Right cardiac atrium (tissue), 5 donors: ENCODE measurements at regions of chr18 and their contacts with region 1.

Region 1: DNA sequence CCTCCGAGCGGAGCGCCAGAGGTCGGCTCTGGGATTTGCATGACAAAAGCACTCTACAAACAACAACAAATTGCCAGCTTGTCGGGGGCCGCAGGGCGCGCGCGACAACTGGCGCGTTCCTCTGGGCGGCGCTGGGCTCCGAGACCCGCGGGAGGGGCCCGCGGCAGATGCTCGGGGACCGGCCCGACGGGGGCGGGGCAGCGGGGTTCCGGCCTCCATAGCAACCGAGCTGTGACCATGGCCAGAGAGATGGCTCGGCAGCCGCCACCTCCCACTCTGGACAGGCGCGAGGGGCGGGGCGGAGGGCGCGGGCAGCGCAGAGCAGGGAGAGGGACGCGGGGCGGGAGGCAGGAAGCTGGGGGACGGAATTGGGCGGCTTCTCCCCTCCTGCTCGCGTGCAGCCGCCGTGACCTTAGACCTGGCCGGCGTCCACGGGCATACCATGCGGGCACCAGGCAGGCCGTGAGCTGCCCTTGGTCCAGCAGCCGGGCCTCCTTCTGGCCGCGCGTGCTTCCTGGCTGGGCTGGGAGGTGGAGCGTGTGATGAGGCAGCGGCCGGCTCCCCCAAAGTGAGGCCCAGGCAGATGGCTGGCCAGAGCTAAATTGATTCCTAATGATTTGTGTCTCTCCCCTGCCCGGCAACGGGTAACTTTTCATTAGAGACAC is 171.5 kb downstream of the CELF4 start:
- DNase-seq: peak; percentile 85 to 95 (median 94)
- ATAC-seq: peak; percentile 97
- H3K4me3 ChIP-seq: peak overlapping the region; percentile 17
- H3K27ac ChIP-seq: no peak overlapping the region
- H3K4me1 ChIP-seq: no peaks in the 10 kb centered on the region
- H3K27me3 ChIP-seq: no peaks in the 10 kb centered on the region

Region 2: DNA sequence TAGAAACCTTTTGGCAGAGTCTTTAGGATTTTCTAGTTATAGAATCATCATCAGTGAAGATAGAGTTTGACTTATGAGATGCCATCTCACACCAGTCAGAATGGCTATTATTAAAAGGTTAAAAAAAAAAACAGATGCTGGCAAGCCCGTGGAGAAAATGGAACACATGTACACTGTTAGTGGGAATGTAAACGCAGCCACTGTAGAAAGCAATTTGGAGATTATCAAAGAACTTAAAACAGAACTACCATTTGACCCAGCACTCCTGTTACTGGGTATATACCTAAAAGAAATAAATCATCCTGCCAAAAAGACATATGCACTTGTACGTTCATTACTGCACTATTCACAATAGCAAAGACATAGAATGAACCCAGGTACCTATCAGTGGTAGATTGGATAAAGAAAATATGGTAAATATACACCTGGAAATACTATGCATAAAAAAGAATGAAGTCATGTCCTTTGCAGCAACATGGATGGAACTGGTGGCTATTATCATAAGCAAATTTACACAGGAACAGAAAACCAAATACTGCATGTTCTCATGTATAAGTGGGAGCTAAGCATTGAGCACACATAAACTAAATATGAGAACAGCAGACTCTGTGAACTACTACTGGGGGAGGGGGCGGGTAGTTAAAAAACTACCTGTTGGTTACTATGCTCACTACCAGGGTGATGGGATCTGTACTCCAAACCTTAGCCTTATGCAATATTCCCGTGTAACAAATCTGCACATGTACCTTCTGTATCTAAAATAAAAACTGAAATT is 286.1 kb before region 1 on chr18:
- intact Hi-C with region 1: no loop called
- DNase-seq: no peak
- ATAC-seq: no peak
- H3K4me3 ChIP-seq: no peak overlapping the region
- H3K27ac ChIP-seq: no peak overlapping the region
- H3K4me1 ChIP-seq: no peaks in the 10 kb centered on the region
- H3K27me3 ChIP-seq: no peaks in the 10 kb centered on the region

Region 3: DNA sequence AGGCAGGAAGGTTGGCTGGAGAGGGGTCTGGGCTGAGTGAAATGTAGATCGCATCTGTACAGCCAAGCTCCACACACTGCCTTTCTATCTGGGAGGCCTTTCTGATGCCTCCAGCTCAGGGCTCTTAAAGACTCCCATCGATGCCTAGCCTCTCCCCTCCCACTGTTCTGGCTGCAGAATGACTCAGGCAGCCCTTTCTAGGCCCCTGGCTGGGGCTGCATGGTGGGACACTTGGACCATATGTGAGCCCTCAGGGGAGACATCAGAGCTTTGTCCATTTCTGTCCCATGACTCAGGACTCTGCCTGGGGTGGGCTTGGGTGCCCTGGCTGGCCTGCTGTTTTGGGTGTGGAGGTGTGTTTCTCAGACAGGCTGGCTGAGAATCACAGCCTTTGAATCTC is 70.2 kb after region 1 on chr18:
- intact Hi-C with region 1: no loop called
- DNase-seq: no peak
- ATAC-seq: no peak
- H3K4me3 ChIP-seq: no peak overlapping the region
- H3K27ac ChIP-seq: no peak overlapping the region
- H3K4me1 ChIP-seq: no peaks in the 10 kb centered on the region
- H3K27me3 ChIP-seq: no peaks in the 10 kb centered on the region

Region 4: GRCh38 chr18:37476182-37476581 is 82.1 kb after region 1 on chr18:
- intact Hi-C with region 1: loop called in 1 of 4 experiments (anchors 10 kb)
- DNase-seq: no peak
- ATAC-seq: no peak
- H3K4me3 ChIP-seq: no peak overlapping the region
- H3K27ac ChIP-seq: no peak overlapping the region
- H3K4me1 ChIP-seq: no peaks in the 10 kb centered on the region
- H3K27me3 ChIP-seq: no peaks in the 10 kb centered on the region

Region 5: DNA sequence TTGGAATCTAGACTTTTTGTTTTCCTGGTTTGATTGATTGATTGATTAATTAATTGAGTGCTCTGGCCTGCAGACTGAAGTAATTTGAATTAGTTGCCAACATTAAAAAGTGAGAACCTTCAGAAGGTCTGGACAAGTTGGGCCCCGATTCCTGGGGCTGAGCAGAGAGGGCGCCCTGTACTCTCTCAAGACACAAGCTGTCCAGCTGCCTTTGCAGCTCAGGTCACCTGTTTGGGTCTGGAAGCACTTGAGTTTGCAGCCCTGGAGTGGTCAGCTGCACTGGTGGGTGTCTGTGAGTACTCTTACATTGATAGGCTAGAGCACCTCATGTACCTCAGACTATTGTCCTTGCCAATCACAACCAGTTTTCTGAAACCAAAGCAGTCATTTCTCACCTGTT is 194.2 kb after region 1 on chr18:
- intact Hi-C with region 1: no loop called
- DNase-seq: no peak
- ATAC-seq: no peak
- H3K4me3 ChIP-seq: no peak overlapping the region
- H3K27ac ChIP-seq: no peak overlapping the region
- H3K4me1 ChIP-seq: no peaks in the 10 kb centered on the region
- H3K27me3 ChIP-seq: no peaks in the 10 kb centered on the region

Region 6: DNA sequence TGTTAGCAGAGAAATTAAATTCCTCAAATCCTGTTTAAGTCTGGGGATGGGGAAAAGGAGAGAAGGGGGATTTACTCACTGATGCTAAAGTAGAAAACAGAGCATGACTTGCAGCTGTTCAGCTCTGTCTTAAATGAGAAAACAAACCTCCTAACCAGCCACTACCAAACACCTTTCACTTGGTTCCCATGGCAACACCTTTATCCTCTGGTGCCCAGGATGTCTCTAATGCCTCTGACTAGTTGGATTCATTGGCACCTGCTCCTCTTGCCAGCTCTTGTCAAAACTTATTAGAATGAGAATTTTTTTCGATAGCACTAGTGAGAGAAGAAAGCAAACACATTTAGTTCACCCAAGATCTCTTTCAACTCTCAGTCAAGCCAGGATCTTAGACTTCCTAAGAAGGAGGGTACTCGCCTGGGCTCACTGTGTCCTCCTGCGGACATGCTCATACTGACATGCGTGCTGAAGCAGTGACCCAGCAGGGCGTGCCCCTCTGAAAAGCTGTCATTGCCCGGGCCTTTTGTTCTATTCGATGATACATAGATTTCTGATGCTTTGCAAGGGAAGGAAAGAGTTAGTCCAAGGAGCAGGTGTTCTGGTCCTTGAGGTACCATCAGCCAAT is 827.5 kb after region 1 on chr18:
- intact Hi-C with region 1: no loop called
- DNase-seq: peak in 1 of 3 donors; percentile 27
- ATAC-seq: no peak
- H3K4me3 ChIP-seq: no peak overlapping the region
- H3K27ac ChIP-seq: no peak overlapping the region
- H3K4me1 ChIP-seq: no peaks in the 10 kb centered on the region
- H3K27me3 ChIP-seq: no peaks in the 10 kb centered on the region